ENCODE measurements at regions of chr20 and their contacts with region 1.

Region 1: DNA sequence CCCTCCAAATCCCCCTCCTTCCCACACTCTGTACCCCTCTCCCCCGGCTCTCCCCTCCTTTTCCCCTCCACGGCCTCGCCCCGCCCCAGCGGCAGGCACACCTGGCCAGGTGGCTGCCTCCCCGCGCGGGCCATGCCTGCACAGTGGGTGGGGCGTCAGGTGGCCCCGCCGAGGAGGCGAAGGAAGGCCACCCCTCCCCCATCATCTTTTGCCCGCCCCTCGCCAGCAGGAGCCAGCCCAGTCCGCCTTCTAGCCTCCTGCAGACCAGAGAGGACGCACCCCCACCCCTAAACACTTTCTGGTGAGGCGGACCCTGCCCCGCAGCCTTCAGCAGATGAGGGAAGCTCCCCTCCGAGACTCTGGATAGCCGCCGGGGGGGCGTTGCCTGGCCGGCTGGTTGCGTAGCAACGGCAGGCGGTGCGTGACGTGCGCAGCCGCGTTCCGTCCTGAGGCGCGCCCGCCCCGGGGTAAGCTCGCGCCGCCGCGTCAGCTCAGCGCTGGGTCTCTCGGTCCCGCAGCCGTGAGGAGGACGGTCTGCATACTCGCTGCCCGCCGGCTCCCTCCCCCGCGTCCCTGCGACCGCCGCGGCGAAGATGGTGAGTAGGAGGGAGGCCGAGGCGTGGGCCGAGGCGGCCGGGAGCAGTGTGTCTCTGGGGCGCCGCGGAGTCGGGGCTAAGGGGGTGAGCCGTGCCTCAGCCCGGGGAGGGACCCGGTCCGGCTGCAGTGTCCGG is at the start of gene DSTN:
- DNase-seq: peak; percentile 94
- H3K4me3 Mint-ChIP-seq: peak within 1 kb of the TSS; percentile 94
- H3K27ac Mint-ChIP-seq: peak within 1 kb of the TSS; percentile 99
- H3K4me1 Mint-ChIP-seq: peaks cover 37% of the 10 kb centered on the region
- H3K27me3 Mint-ChIP-seq: no peaks in the 10 kb centered on the region
- CTCF ChIP-seq: no peak
- total RNA-seq, gene DSTN: 217 and 280 TPM in 2 replicates

Region 2: DNA sequence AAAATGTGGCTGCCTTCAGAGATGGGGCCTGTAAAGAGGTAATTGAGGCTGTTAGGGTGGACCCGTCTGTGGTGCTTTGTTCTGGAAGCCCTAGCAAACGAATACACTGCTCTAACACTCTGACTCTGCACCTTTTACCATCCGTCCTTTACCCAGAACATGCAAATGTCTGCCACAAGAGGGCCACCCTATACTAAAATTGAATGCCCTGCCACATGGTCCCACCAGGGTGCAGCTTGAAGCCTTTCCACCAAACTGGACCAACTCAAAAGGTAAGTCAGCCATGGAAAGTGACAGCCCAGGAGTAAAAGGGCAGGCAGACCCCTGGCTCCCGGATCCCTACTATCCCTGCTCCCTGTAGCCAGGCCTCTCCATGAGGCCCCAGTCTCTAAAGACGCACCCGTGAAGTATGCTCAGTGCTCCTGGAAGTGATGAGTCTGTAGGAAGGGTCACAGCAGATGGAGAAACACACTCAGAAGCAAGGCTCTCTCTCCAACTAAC is 32.8 kb before region 1 on chr20:
- CTCF ChIA-PET with region 1: interaction called, 75 read pairs
- POLR2A ChIA-PET with region 1: interaction called, 348 read pairs
- intact Hi-C with region 1: loop called (anchors 1 kb)
- DNase-seq: peak; percentile 83
- H3K4me3 Mint-ChIP-seq: no peak overlapping the region
- H3K27ac Mint-ChIP-seq: no peak overlapping the region
- H3K4me1 Mint-ChIP-seq: peaks cover 20% of the 10 kb centered on the region
- H3K27me3 Mint-ChIP-seq: no peaks in the 10 kb centered on the region
- CTCF ChIP-seq: peak; percentile 84

Region 3: DNA sequence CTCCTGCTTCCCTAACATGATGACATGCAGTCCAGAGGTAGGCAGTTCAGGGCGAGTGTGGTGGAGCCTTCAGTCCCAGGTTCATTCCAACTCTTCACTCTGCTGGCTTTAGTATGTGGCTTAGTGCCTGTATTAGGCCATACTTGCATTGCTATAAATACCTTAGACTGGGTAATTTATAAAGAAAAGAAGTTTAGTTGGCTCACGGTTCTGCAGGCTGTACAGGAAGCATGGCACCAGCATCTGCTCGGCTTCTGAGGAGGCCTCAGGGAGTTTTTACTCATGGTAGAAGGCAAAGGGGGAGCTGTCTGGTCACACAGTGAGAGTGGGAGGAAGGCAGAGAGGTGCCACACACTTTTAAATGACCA is 18.8 kb before region 1 on chr20:
- CTCF ChIA-PET with region 1: interaction called, 75 read pairs
- POLR2A ChIA-PET with region 1: interaction called, 340 read pairs
- intact Hi-C with region 1: no loop called
- DNase-seq: no peak
- H3K4me3 Mint-ChIP-seq: no peak overlapping the region
- H3K27ac Mint-ChIP-seq: no peak overlapping the region
- H3K4me1 Mint-ChIP-seq: no peaks in the 10 kb centered on the region
- H3K27me3 Mint-ChIP-seq: no peaks in the 10 kb centered on the region
- CTCF ChIP-seq: no peak

Region 4: DNA sequence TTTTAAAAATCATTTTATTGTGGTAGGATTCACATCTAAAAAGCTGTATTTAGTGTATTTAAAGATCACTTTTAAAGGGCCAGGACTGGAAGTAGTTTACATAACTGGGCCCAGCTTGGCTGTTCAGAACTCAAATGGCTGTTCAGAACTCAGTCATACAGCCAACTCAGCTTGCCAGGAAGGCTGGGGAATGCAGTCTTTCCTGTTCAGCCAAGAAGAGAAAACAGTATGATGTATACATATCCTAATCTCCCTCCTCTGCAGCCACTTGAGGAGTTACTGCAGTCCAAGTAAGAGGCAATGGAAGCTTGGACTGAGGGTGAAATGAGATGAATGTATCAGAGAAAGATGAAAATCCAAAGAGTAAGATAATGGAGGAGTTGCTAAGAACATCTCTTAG is 24.7 kb after region 1 on chr20:
- CTCF ChIA-PET with region 1: interaction called, 4 read pairs
- POLR2A ChIA-PET with region 1: interaction called, 104 read pairs
- intact Hi-C with region 1: no loop called
- DNase-seq: no peak
- H3K4me3 Mint-ChIP-seq: no peak overlapping the region
- H3K27ac Mint-ChIP-seq: no peak overlapping the region
- H3K4me1 Mint-ChIP-seq: peaks cover 49% of the 10 kb centered on the region
- H3K27me3 Mint-ChIP-seq: no peaks in the 10 kb centered on the region
- CTCF ChIP-seq: no peak

Region 5: GRCh38 chr20:17611540-17612286 is 41.9 kb after region 1 on chr20:
- CTCF ChIA-PET with region 1: interaction called, 15 read pairs
- POLR2A ChIA-PET with region 1: interaction called, 42 read pairs
- intact Hi-C with region 1: loop called (anchors 5 kb)
- DNase-seq: peak; percentile 68
- H3K4me3 Mint-ChIP-seq: no peak overlapping the region
- H3K27ac Mint-ChIP-seq: peak overlapping the region; percentile 93
- H3K4me1 Mint-ChIP-seq: peaks cover 7% of the 10 kb centered on the region
- H3K27me3 Mint-ChIP-seq: no peaks in the 10 kb centered on the region
- CTCF ChIP-seq: no peak

Region 6: DNA sequence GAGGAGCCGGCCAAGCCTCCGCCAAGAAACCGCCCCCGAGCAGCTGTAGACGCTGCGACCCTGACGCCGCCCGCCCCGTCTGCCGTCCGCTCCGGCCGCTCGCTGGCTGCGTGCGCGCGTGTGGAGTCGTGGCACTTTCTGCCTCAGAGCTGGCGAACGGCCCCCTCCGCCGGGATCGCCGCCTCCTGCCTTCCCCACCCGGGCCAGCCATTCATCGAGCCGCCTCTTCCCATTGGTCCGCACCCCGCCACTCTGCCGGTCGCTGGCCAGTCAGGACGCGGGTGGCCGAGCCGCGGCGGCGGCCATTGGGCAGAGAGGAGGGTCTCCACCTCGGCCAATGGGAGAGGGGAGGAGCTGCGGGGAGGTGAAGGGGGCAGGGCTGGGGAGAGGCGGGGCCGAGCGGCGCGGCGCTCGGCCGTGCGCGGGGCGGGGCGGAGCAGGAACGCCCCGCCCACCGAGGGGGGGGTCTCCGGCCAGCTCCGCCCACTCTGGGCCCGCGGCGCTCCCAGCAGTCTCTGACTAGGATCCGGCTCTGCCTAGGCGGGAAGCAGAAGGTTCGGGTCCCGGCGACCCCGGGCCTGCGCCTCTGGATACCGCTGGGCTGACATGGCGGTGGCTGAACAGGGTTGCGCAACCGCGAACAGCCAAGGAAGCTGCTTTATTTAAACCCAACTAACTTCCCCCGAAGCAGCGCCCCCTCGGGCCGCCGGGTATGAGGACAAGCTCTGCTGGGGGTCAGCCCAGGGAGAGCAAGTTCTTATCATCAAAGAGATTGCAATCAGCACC is 112.5 kb after region 1 on chr20 and contains the start of gene RRBP1:
- CTCF ChIA-PET with region 1: interaction called, 6 read pairs
- POLR2A ChIA-PET with region 1: interaction called, 22 read pairs
- intact Hi-C with region 1: no loop called
- DNase-seq: peak; percentile 97
- H3K4me3 Mint-ChIP-seq: peak within 1 kb of the TSS; percentile 81
- H3K27ac Mint-ChIP-seq: peak within 1 kb of the TSS; percentile 61
- H3K4me1 Mint-ChIP-seq: peaks cover 11% of the 10 kb centered on the region
- H3K27me3 Mint-ChIP-seq: peaks cover 41% of the 10 kb centered on the region
- CTCF ChIP-seq: peak; percentile 65
- total RNA-seq, gene RRBP1: 203 and 244 TPM in 2 replicates

Region 7: GRCh38 chr20:17710379-17711266 is 140.8 kb after region 1 on chr20:
- CTCF ChIA-PET with region 1: no interaction called
- POLR2A ChIA-PET with region 1: no interaction called
- intact Hi-C with region 1: no loop called
- DNase-seq: no peak
- H3K4me3 Mint-ChIP-seq: no peak overlapping the region
- H3K27ac Mint-ChIP-seq: no peak overlapping the region
- H3K4me1 Mint-ChIP-seq: no peaks in the 10 kb centered on the region
- H3K27me3 Mint-ChIP-seq: no peaks in the 10 kb centered on the region
- CTCF ChIP-seq: no peak

Measured in MCF 10A (cell line).